HepG2 (cell line): ENCODE measurements at regions of chr14 and their contacts with region 1.

Region 1: GRCh38 chr14:77097700-77098528 is at the start of gene CIPC:
- DNase-seq: peak; percentile 96
- ATAC-seq: peak; percentile 93
- H3K4me3 ChIP-seq: peak within 1 kb of the TSS; percentile 75 to 97 (median 92)
- H3K27ac ChIP-seq: peak within 1 kb of the TSS; percentile 88
- H3K4me1 ChIP-seq: peaks cover 27% of the 10 kb centered on the region
- H3K27me3 ChIP-seq: no peaks in the 10 kb centered on the region; a peak in 1 of 5 replicates
- CTCF ChIP-seq: peak; percentile 25; the same call in 1 of the 2 replicates
- EP300 ChIP-seq: peak; percentile 25 to 43; a peak in 1 of 4 replicates
- POLR2A ChIP-seq: peak in 1 of 2 experiments; percentile 72; a peak in 3 of 4 replicates
- RAD21 ChIP-seq: peak; percentile 18; the same call in 1 of the 2 replicates
- total RNA-seq, gene CIPC: 13.9 and 18.4 TPM in 2 replicates

Region 2: GRCh38 chr14:76870166-76870565 is 227.7 kb before region 1 on chr14:
- CTCF ChIA-PET with region 1: interaction called, 14 read pairs
- POLR2A ChIA-PET with region 1: no interaction called
- in situ Hi-C with region 1: no loop called
- intact Hi-C with region 1: loop called (anchors 1 kb)
- DNase-seq: peak; percentile 16
- ATAC-seq: peak; percentile 81
- H3K4me3 ChIP-seq: no peak overlapping the region
- H3K27ac ChIP-seq: no peak overlapping the region
- H3K4me1 ChIP-seq: no peaks in the 10 kb centered on the region
- H3K27me3 ChIP-seq: peaks cover 0 to 3% of the 10 kb centered on the region in 2 experiments; a peak in 1 of 5 replicates
- CTCF ChIP-seq: peak; percentile 40
- EP300 ChIP-seq: no peak
- POLR2A ChIP-seq: no peak
- RAD21 ChIP-seq: no peak

Region 3: DNA sequence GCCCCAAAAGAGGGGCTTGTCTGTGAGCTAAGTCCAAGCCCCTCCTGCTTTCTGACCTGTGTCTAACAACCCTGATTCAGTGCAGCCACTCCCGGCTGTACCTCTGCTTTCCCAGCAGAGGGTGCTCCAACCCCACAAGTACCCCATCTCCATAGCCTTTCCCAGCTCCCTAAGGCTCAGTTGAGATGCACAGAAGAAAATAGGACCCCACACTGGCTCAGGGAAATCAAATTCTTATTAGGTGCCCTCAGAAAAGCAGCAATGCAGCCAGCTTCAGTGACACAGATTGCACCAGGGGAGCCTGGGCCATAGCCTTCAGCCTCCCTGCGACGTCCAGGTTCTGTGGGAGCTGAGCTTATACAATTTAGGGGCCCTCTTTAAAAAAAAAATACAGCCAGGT is 221.8 kb before region 1 on chr14:
- CTCF ChIA-PET with region 1: interaction called, 22 read pairs
- POLR2A ChIA-PET with region 1: no interaction called
- in situ Hi-C with region 1: no loop called
- intact Hi-C with region 1: loop called (anchors 1 kb)
- DNase-seq: peak; percentile 43
- ATAC-seq: peak; percentile 93
- H3K4me3 ChIP-seq: no peak overlapping the region
- H3K27ac ChIP-seq: no peak overlapping the region
- H3K4me1 ChIP-seq: no peaks in the 10 kb centered on the region
- H3K27me3 ChIP-seq: peaks cover 4 to 10% of the 10 kb centered on the region in 2 experiments; a peak in 3 of 5 replicates
- CTCF ChIP-seq: peak; percentile 92
- EP300 ChIP-seq: no peak
- POLR2A ChIP-seq: no peak
- RAD21 ChIP-seq: peak; percentile 90